ENCODE measurements at regions of chr12 and their contacts with region 1.

Region 1: DNA sequence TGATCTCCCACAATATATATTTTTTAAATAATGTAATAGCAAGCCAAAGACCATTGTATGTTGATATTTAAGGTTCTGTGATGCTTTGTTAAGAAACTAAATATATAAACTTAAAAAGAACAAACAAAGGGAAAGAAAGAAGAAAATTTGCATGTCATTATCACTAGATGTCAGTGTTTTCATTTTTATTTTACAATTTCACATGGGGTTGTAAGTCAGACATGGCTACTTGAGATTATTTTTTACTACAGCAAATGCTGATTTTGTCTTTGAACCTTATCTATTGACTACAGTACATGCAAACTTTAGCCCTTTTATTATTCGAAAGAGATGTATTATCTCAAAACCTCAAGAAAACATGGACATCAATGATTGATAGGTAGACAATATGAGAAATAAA is 36.1 kb downstream of the SLCO1C1 start:
- DNase-seq: no peak
- H3K4me3 Mint-ChIP-seq: no peak overlapping the region
- H3K27ac Mint-ChIP-seq: no peak overlapping the region
- H3K4me1 Mint-ChIP-seq: no peaks in the 10 kb centered on the region
- H3K27me3 Mint-ChIP-seq: no peaks in the 10 kb centered on the region
- CTCF ChIP-seq: no peak

Region 2: GRCh38 chr12:21065845-21066244 is 334.6 kb after region 1 on chr12:
- CTCF ChIA-PET with region 1: no interaction called
- intact Hi-C with region 1: loop called (anchors 5 kb)
- DNase-seq: peak; percentile 16
- H3K4me3 Mint-ChIP-seq: no peak overlapping the region
- H3K27ac Mint-ChIP-seq: no peak overlapping the region
- H3K4me1 Mint-ChIP-seq: no peaks in the 10 kb centered on the region
- H3K27me3 Mint-ChIP-seq: no peaks in the 10 kb centered on the region
- CTCF ChIP-seq: no peak

Measured in Calu3 (cell line).